Heart left ventricle (tissue), 16 donors: ENCODE measurements at regions of chr1 and their contacts with region 1.

Region 1: GRCh38 chr1:156525071-156525501 is 24.5 kb upstream of the MEF2D start:
- DNase-seq: no peak
- ATAC-seq: peak in 2 of 4 donors; percentile 4 to 28
- H3K4me3 ChIP-seq: peak overlapping the region in 1 of 12 donors; percentile 15
- H3K27ac ChIP-seq: peak overlapping the region in 1 of 12 donors; percentile 58
- H3K4me1 ChIP-seq: peaks cover 0 to 25% (median 10%) of the 10 kb centered on the region in 12 donors
- H3K27me3 ChIP-seq: no peaks in the 10 kb centered on the region
- CTCF ChIP-seq: no peak
- POLR2A ChIP-seq: no peak

Region 2: DNA sequence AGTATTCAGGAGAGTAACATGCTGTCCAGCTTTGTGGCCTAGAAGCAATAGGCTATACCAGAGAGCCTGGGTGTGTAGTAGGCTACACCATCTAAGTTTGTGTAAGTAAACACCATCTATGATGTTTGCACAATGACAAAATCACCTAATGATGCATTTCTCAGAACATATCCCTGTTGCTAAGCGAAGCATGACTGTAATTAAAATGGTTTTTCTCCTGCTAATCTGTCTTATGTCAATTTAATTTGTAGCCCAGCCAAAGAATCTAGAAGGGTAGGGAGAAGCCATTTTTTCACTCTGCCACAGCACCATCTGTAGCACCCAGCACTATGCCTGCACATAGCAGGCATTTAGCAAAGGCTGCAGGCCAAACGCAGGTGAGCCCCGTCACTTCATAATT is 52.5 kb after region 1 on chr1:
- intact Hi-C with region 1: loop called in 1 of 10 experiments (anchors 5 kb)
- DNase-seq: no peak
- ATAC-seq: no peak
- H3K4me3 ChIP-seq: no peak overlapping the region
- H3K27ac ChIP-seq: no peak overlapping the region
- H3K4me1 ChIP-seq: peaks cover 0 to 3% (median under 1%) of the 10 kb centered on the region in 12 donors
- H3K27me3 ChIP-seq: peaks cover 0 to 2% (median 0%) of the 10 kb centered on the region in 9 donors
- CTCF ChIP-seq: no peak
- POLR2A ChIP-seq: no peak

Region 3: DNA sequence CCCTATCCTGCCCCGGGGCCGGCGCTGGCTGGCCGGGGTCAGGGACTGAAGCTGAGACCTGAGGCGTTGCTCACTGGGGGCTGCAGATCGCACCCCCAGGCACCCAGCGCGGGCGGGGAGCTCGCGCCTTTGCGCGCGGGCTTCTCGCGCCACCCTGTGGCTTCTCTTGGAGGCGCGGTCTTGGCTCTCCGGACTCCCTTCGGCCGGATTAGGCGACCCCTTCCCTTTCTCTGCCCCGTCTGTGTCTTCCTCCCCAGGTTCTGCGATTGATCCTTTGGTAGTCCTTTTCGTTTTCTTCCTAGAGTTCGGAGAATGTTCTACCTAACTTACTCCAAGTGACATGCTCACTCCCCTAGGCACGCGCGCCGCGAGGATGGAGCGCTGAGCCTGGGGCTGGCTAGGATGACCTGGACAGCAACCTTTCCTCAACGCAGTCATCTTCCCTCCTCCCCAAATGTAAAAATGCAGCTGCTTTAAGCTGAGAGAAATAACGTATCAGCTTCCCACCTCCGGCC is 335.1 kb after region 1 on chr1:
- intact Hi-C with region 1: no loop called
- DNase-seq: peak in 3 of 5 donors; percentile 30 to 59 (median 41)
- ATAC-seq: peak; percentile 28 to 80 (median 60)
- H3K4me3 ChIP-seq: peak overlapping the region; percentile 16 to 56 (median 40)
- H3K27ac ChIP-seq: no peak overlapping the region
- H3K4me1 ChIP-seq: peaks cover 12 to 37% (median 29%) of the 10 kb centered on the region in 12 donors
- H3K27me3 ChIP-seq: peaks cover 6 to 63% (median 34%) of the 10 kb centered on the region in 9 donors
- CTCF ChIP-seq: peak; percentile 70 to 93 (median 82)
- POLR2A ChIP-seq: no peak